PC-9 (cell line): ENCODE measurements at regions of chr17 and their contacts with region 1.

Region 1: DNA sequence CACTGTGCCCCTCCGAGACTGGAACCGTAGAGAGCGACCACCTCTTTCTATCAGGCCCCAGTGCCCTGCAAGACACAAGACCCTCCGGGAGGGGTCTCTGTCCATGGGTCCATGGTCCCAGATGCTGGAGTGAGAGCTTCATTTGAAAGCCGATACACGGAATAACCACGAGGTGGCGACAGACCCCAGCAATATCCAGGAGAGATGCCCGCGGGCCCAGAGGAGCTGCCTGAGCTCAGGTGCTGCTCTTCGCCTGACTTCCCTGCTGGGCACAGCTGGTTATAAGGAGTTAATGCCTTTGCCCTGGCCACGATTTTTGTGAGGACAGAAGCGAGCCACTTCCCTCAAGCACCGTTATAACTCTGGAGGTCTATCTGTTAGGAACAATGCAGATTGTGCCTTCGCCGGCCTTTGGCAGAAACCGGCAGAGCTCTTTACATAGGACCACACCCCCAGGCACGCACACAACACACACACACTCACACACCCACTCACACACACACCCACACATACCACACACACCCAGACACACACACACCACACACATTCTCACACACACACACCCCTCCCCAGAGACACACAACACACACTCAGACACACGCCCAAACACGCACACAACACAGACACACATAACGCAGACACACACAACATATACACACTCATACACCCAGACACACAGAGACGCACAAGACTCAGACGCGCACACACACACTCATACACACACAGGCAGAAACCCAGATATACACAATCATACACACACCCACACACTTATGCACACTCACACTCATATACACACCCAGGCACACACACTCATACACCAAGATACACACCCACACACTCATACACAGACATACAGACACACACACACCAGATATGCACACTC is 436.4 kb downstream of the SOX9 start:
- DNase-seq: peak; percentile 47 to 61
- H3K4me3 ChIP-seq: no peak overlapping the region
- H3K27ac ChIP-seq: no peak overlapping the region
- H3K4me1 ChIP-seq: peaks cover 14% of the 10 kb centered on the region; the same call in 1 of the 2 replicates
- H3K27me3 ChIP-seq: no peaks in the 10 kb centered on the region
- CTCF ChIP-seq: peak; percentile 85

Region 2: GRCh38 chr17:70767102-70767701 is 1790.0 kb before region 1 on chr17:
- CTCF ChIA-PET with region 1: interaction called, 4 read pairs
- POLR2A ChIA-PET with region 1: no interaction called
- intact Hi-C with region 1: loop called (anchors 5 kb)
- DNase-seq: peak in 1 of 2 experiments; percentile 8
- H3K4me3 ChIP-seq: no peak overlapping the region
- H3K27ac ChIP-seq: no peak overlapping the region
- H3K4me1 ChIP-seq: no peaks in the 10 kb centered on the region
- H3K27me3 ChIP-seq: no peaks in the 10 kb centered on the region
- CTCF ChIP-seq: peak; percentile 97

Region 3: GRCh38 chr17:72332367-72332766 is 224.8 kb before region 1 on chr17:
- CTCF ChIA-PET with region 1: no interaction called
- POLR2A ChIA-PET with region 1: no interaction called
- intact Hi-C with region 1: no loop called
- DNase-seq: no peak
- H3K4me3 ChIP-seq: no peak overlapping the region
- H3K27ac ChIP-seq: no peak overlapping the region
- H3K4me1 ChIP-seq: peaks cover 3% of the 10 kb centered on the region; the same call in 1 of the 2 replicates
- H3K27me3 ChIP-seq: no peaks in the 10 kb centered on the region
- CTCF ChIP-seq: no peak

Region 4: GRCh38 chr17:72539981-72540897 is 16.9 kb before region 1 on chr17:
- CTCF ChIA-PET with region 1: no interaction called
- POLR2A ChIA-PET with region 1: no interaction called
- intact Hi-C with region 1: no loop called
- DNase-seq: peak; percentile 45 to 88
- H3K4me3 ChIP-seq: peak overlapping the region; percentile 46; the same call in 1 of the 2 replicates
- H3K27ac ChIP-seq: peak overlapping the region; percentile 68
- H3K4me1 ChIP-seq: peaks cover 16% of the 10 kb centered on the region
- H3K27me3 ChIP-seq: no peaks in the 10 kb centered on the region
- CTCF ChIP-seq: peak; percentile 75

Region 5: GRCh38 chr17:72661093-72661944 is 104.1 kb after region 1 on chr17:
- CTCF ChIA-PET with region 1: no interaction called
- POLR2A ChIA-PET with region 1: no interaction called
- intact Hi-C with region 1: loop called (anchors 1 kb)
- DNase-seq: peak; percentile 90 to 98
- H3K4me3 ChIP-seq: 0 out of 2 replicates have a peak overlapping the region, but pooled peaks have one; percentile 22
- H3K27ac ChIP-seq: peak overlapping the region; percentile 92
- H3K4me1 ChIP-seq: peaks cover 44% of the 10 kb centered on the region
- H3K27me3 ChIP-seq: no peaks in the 10 kb centered on the region
- CTCF ChIP-seq: peak; percentile 63

Region 6: DNA sequence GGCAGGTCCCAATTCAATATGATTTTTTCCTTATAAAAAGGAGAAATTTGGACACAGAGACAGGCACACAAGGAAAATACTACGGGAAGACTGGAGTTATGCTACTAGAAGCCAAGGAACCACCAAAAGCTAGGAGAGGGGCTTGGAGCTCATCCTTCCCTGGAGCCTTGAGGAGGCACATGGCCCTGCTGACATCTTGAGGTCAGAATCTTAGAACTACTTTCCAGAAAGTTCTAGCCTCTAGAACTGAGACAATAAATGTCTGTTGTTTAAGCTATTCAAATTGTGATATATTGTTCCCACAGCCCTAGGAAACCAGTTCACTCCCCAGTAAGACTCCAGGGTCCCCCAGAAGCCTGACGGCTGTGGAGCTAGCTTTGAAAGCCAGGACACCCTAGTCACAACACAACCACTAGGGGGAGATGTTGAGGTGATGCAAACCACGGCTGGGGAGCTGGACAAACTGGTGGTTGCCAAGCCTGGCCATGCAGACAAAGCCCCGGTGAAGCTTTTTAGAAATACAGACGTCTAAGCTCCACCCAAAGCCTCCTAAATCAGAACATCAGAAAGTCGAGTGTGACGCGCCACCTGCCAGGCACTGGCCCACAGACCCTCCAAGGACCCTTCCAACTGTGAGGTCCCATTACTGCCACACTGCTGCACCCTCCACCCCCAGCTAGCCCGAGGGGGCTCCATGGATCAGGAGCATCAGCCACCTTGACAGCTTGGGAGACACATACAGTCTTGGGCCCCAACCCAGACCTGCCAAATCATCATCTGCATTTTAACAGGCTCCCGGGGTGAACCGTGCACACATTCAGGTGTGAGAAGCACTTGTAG is 428.9 kb after region 1 on chr17:
- CTCF ChIA-PET with region 1: no interaction called
- POLR2A ChIA-PET with region 1: interaction called, 4 read pairs
- intact Hi-C with region 1: loop called (anchors 10 kb)
- DNase-seq: peak in 1 of 2 experiments; percentile 47
- H3K4me3 ChIP-seq: no peak overlapping the region
- H3K27ac ChIP-seq: peak overlapping the region; percentile 89
- H3K4me1 ChIP-seq: peaks cover 28% of the 10 kb centered on the region
- H3K27me3 ChIP-seq: no peaks in the 10 kb centered on the region
- CTCF ChIP-seq: peak; percentile 90

Region 7: GRCh38 chr17:73365906-73366623 is 808.9 kb after region 1 on chr17:
- CTCF ChIA-PET with region 1: no interaction called
- POLR2A ChIA-PET with region 1: no interaction called
- intact Hi-C with region 1: loop called (anchors 5 kb)
- DNase-seq: no peak
- H3K4me3 ChIP-seq: no peak overlapping the region
- H3K27ac ChIP-seq: no peak overlapping the region
- H3K4me1 ChIP-seq: no peaks in the 10 kb centered on the region
- H3K27me3 ChIP-seq: peaks cover 4% of the 10 kb centered on the region; the same call in 1 of the 2 replicates
- CTCF ChIP-seq: no peak

Region 8: DNA sequence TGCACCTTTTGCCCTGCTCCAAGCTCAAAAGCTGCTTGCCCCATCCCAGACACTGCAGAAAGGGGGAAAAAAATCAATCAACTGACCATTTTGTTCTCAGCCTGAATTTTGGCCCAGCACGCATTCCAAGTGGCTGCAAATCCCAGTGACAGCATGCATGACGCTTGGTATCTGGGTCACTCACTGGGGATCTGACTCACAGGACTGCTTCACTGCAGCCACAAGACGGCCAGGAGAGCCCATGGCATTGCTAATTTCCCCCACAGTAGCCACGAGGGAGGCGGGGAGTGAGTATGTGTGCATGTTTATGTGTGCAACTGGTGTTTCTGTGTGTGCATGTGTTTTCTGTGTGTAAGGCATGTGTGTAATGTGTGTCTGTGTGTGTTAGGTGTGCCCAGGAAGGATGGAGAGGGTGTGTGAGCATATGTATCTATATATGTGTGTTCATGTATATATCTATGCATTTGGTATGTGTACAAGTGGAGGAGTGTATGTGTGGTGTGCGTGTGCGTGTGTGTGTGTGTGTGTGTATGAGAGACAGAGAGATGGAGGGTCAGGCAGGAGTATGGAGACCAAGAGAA is 1053.2 kb after region 1 on chr17:
- CTCF ChIA-PET with region 1: no interaction called
- POLR2A ChIA-PET with region 1: no interaction called
- intact Hi-C with region 1: no loop called
- DNase-seq: no peak
- H3K4me3 ChIP-seq: no peak overlapping the region
- H3K27ac ChIP-seq: no peak overlapping the region
- H3K4me1 ChIP-seq: no peaks in the 10 kb centered on the region
- H3K27me3 ChIP-seq: peaks cover 90% of the 10 kb centered on the region
- CTCF ChIP-seq: no peak